T-cell (primary cell): ENCODE measurements at regions of chr4 and their contacts with region 1.

Region 1: GRCh38 chr4:112222219-112222955 is 9.2 kb upstream of the AP1AR start:
- DNase-seq: no peak
- ATAC-seq: no peak
- H3K4me3 ChIP-seq: no peak overlapping the region
- H3K4me3 Mint-ChIP-seq: no peak overlapping the region
- H3K27ac ChIP-seq: no peak overlapping the region
- H3K27ac Mint-ChIP-seq: no peak overlapping the region
- H3K4me1 ChIP-seq: no peaks in the 10 kb centered on the region
- H3K4me1 Mint-ChIP-seq: peaks cover 0 to 4% (median 0%) of the 10 kb centered on the region in 3 donors
- H3K27me3 ChIP-seq: no peaks in the 10 kb centered on the region
- H3K27me3 Mint-ChIP-seq: peaks cover 2 to 3% of the 10 kb centered on the region in 2 donors

Region 2: GRCh38 chr4:112199040-112199439 is 23.3 kb before region 1 on chr4:
- CTCF ChIA-PET with region 1: interaction called in 1 of 2 experiments, 10 read pairs
- POLR2A ChIA-PET with region 1: interaction called in 1 of 2 experiments, 3 read pairs
- DNase-seq: no peak
- ATAC-seq: no peak
- H3K4me3 ChIP-seq: no peak overlapping the region
- H3K4me3 Mint-ChIP-seq: no peak overlapping the region
- H3K27ac ChIP-seq: no peak overlapping the region
- H3K27ac Mint-ChIP-seq: no peak overlapping the region
- H3K4me1 ChIP-seq: no peaks in the 10 kb centered on the region
- H3K4me1 Mint-ChIP-seq: no peaks in the 10 kb centered on the region
- H3K27me3 ChIP-seq: no peaks in the 10 kb centered on the region
- H3K27me3 Mint-ChIP-seq: no peaks in the 10 kb centered on the region

Region 3: GRCh38 chr4:112266821-112267220 is 44.4 kb after region 1 on chr4:
- CTCF ChIA-PET with region 1: no interaction called
- POLR2A ChIA-PET with region 1: no interaction called
- DNase-seq: peak in 1 of 35 experiments; percentile 45
- ATAC-seq: no peak
- H3K4me3 ChIP-seq: no peak overlapping the region
- H3K4me3 Mint-ChIP-seq: no peak overlapping the region
- H3K27ac ChIP-seq: no peak overlapping the region
- H3K27ac Mint-ChIP-seq: no peak overlapping the region
- H3K4me1 ChIP-seq: no peaks in the 10 kb centered on the region
- H3K4me1 Mint-ChIP-seq: peaks cover 0 to 9% (median 8%) of the 10 kb centered on the region in 3 donors
- H3K27me3 ChIP-seq: no peaks in the 10 kb centered on the region
- H3K27me3 Mint-ChIP-seq: no peaks in the 10 kb centered on the region